Astrocyte of the cerebellum (primary cell): ENCODE measurements at regions of chr1 and their contacts with region 1.

Region 1: GRCh38 chr1:119968068-119968492 is 71.8 kb upstream of the ADAM30 start:
- DNase-seq: no peak
- H3K4me3 ChIP-seq: no peak overlapping the region
- CTCF ChIP-seq: peak; percentile 72

Region 2: DNA sequence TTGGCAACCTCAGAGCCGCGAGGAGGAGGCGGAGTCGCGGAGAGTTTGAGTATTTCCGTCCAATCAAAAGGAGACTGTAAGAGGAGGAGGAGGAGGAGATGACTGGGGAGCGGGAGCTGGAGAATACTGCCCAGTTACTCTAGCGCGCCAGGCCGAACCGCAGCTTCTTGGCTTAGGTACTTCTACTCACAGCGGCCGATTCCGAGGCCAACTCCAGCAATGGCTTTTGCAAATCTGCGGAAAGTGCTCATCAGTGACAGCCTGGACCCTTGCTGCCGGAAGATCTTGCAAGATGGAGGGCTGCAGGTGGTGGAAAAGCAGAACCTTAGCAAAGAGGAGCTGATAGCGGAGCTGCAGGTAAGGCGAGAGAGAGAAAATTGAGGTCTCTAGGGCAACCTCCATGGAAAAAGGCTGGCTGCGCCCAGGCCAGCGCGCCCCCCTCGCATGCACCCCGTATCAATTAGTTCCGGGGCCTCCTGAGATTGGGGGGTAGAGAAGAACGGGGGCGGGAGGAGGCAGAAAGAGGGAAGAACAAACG is 256.2 kb before region 1 on chr1 and contains the start of gene PHGDH:
- in situ Hi-C with region 1: no loop called
- DNase-seq: peak; percentile 80
- H3K4me3 ChIP-seq: peak within 1 kb of the TSS; percentile 83
- CTCF ChIP-seq: no peak

Region 3: GRCh38 chr1:119870917-119871596 is 97.0 kb before region 1 on chr1:
- in situ Hi-C with region 1: loop called (anchors 25 kb)
- DNase-seq: peak; percentile 65
- H3K4me3 ChIP-seq: no peak overlapping the region
- CTCF ChIP-seq: peak; percentile 100

Region 4: GRCh38 chr1:120176092-120176855 is 208.2 kb after region 1 on chr1 and contains the start of gene SEC22B:
- in situ Hi-C with region 1: no loop called
- DNase-seq: peak; percentile 95
- H3K4me3 ChIP-seq: peak within 1 kb of the TSS; percentile 89
- CTCF ChIP-seq: no peak